ENCODE measurements at regions of chr17 and their contacts with region 1.

Region 1: DNA sequence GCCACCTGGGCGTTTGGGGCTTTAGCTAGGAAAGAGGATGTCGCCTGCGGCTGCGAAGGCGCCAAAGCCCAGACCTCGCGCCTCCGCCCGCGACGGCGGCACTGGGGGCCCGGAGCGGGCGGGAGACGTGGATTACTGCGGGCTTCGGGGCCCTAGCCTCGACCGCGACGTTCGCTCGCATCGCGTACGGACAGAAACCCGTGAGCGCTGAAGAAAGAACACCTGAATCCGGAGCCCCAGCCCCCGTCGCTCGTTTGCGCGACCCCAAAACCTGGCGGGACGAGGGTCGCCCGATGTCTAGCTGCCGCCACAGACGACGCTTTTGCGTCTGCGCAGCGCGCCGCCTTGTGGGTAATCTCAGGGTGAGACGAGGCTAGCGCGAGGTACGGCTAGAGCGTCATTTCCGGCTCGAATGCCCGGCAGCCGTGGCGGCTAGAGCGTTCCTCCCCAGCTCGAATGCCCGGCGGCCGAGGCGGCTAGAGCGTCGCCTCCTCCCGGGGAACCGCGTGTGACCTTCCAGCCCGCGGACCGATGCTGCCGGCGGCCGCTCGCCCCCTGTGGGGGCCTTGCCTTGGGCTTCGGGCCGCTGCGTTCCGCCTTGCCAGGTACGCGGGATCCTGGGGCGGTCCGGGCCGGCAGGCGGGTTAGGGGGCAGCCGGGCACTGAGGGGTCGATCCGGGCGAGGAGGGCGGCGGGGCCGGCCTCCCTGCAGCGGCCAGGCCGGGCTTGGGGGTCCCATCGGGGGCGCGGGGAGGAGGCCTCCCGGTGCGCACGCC is at the start of gene MRPL12:
- DNase-seq: peak; percentile 90
- H3K4me3 Mint-ChIP-seq: peak within 1 kb of the TSS; percentile 98
- H3K27ac Mint-ChIP-seq: peak within 1 kb of the TSS; percentile 97
- H3K4me1 Mint-ChIP-seq: peaks cover 12% of the 10 kb centered on the region
- H3K27me3 Mint-ChIP-seq: no peaks in the 10 kb centered on the region
- CTCF ChIP-seq: no peak
- total RNA-seq, gene MRPL12: 82.6 and 143 TPM in 2 replicates

Region 2: DNA sequence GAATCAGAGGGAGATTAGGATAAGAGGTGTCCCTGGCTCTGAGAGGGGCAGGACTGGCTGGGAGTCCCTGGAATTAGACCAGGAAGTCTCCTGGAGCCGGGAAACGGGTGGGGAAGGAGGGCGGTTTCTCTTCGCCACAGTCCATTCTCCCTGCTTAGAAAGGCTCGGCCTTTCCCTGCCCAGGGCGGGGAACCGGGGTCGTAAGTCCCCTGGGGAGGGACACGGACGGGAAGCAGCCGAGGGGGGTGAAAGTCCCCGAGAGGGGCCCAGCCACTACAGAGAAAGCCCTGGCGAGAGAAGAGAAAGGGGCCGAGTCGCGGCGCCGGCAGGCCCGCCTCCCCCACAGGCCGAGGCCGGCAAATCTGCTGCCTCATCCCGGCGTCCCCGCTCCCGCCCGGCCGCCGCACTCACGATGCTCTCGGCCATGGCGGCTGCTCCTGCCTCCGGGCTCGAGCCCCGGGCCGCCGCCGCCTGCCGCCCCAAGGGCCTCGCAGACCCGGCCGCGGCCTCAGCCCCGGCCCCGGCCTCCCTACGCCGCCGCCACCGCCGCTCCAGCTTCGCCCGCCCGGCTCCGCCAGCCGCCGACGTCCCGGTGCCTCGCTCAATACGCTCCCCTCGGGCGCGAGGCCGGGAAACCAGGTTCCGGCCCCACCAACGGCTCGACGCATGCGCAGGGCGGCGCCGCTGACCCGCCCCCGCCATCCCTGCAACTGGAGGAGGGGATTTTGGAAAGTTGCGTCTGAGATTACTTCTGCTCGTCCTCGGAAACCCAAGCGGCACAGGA is 66.5 kb before region 1 on chr17 and contains the starts of genes NPLOC4 and TSPAN10:
- CTCF ChIA-PET with region 1: no interaction called
- POLR2A ChIA-PET with region 1: interaction called, 21 read pairs
- intact Hi-C with region 1: no loop called
- DNase-seq: peak; percentile 86
- H3K4me3 Mint-ChIP-seq: peak within 1 kb of the TSS; percentile 89
- H3K27ac Mint-ChIP-seq: peak within 1 kb of the TSS; percentile 96
- H3K4me1 Mint-ChIP-seq: peaks cover 9% of the 10 kb centered on the region
- H3K27me3 Mint-ChIP-seq: no peaks in the 10 kb centered on the region
- CTCF ChIP-seq: no peak
- total RNA-seq, gene NPLOC4: 83.9 and 95.1 TPM in 2 replicates
- total RNA-seq, gene TSPAN10: 1.8 and 2.1 TPM in 2 replicates

Region 3: DNA sequence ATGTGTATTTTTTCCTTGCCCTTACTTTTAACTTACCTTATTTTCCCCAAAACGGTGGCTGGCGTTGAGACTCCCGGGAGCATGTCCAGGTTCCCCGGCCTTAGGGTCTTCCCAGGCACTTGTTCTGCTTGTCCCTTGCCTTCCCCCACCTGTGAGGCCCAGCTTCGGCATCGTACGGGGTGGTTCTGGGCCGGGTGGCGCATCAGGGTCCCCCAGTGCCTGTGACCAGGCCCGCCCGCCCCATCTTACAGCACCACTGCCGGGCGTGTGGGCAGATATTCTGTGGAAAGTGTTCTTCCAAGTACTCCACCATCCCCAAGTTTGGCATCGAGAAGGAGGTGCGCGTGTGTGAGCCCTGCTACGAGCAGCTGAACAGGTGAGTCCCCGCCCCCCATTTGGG is 12.0 kb before region 1 on chr17:
- CTCF ChIA-PET with region 1: interaction called, 4 read pairs
- POLR2A ChIA-PET with region 1: interaction called, 122 read pairs
- intact Hi-C with region 1: no loop called
- DNase-seq: no peak
- H3K4me3 Mint-ChIP-seq: no peak overlapping the region
- H3K27ac Mint-ChIP-seq: no peak overlapping the region
- H3K4me1 Mint-ChIP-seq: no peaks in the 10 kb centered on the region
- H3K27me3 Mint-ChIP-seq: no peaks in the 10 kb centered on the region
- CTCF ChIP-seq: no peak

Region 4: GRCh38 chr17:81722184-81723120 is 19.3 kb after region 1 on chr17:
- CTCF ChIA-PET with region 1: interaction called, 3 read pairs
- POLR2A ChIA-PET with region 1: interaction called, 34 read pairs
- intact Hi-C with region 1: no loop called
- DNase-seq: no peak
- H3K4me3 Mint-ChIP-seq: no peak overlapping the region
- H3K27ac Mint-ChIP-seq: no peak overlapping the region
- H3K4me1 Mint-ChIP-seq: peaks cover 21% of the 10 kb centered on the region
- H3K27me3 Mint-ChIP-seq: no peaks in the 10 kb centered on the region
- CTCF ChIP-seq: no peak

Region 5: DNA sequence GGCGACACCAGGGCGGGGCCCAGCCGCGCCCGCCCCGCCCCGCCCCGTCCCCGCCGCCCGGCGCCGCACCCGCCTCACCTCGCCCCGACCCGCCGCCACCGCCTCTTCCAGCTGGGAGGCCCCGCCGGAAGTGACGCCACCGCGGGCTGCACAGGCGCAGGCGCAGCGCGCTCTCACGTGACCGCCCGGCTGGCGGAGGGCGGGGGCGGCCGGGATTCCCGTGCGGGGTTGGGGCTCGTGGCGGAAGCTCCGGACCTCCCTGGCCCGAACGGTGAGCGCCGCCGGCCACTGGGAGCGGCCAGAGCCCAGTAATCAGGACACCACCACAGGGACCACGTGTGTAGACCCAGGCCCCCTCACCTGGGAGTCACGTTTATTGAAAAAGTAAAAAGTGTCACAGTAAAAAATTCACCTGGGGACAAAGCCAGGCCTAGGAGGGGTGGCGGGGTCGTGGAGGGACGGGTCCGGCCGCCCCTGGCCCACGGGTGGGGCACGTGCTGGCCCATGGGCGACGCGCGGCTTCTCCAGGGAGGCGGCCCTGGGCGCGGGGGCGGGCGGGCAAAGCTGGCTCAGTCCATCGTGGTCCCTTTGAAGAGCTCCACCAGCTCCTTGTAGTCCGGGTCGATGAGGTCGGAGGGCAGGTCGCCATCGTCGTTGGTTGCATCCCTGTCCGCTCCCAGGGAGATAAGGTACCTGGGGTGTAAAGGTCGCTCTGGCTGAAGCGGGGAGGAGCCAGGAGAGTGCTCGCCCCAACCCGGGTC is 130.2 kb after region 1 on chr17 and contains the start of gene MCRIP1:
- CTCF ChIA-PET with region 1: no interaction called
- POLR2A ChIA-PET with region 1: interaction called, 16 read pairs
- intact Hi-C with region 1: no loop called
- DNase-seq: peak; percentile 91
- H3K4me3 Mint-ChIP-seq: peak within 1 kb of the TSS; percentile 79
- H3K27ac Mint-ChIP-seq: peak within 1 kb of the TSS; percentile 80
- H3K4me1 Mint-ChIP-seq: peaks cover 9% of the 10 kb centered on the region
- H3K27me3 Mint-ChIP-seq: no peaks in the 10 kb centered on the region
- CTCF ChIP-seq: no peak
- total RNA-seq, gene MCRIP1: 35.6 and 39.2 TPM in 2 replicates

Region 6: DNA sequence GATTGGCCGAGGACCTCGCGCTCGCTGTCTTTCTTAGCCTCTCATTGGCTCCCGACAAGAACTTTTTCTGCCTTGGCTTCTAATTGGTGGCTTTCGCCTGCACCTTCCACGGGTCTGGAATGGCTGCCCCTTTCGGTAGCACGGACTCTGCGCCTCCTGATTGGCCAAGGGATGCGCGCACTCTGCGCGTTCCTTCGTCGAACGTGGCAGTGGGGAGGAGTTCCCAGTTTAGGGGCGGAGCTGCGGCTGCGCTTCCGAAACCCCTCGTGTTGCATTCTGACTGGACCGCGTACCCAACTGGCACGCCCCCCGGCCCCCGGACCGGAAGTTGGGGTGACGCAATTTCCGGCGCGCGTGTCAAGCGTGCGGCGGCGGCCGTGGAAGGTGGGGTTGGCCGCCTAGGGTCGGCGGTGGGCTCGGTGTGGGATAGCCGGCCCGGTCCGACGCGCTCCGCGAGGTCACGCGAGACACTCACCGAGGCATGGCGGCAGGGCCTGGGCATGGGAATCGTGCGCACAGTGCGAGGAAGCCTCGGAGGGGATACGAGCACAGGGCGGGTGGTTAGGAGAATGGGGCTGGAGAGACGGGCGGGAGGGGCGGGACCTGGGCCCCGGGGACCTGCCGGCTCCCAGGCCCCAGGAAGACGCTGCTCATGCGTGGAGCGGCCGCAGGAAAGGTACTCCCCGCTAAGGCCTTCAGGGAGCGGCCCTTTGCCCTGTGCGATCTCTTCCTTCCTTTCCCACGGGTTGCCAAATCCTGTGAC is 157.8 kb after region 1 on chr17:
- CTCF ChIA-PET with region 1: interaction called, 6 read pairs
- POLR2A ChIA-PET with region 1: interaction called, 12 read pairs
- intact Hi-C with region 1: no loop called
- DNase-seq: peak; percentile 100
- H3K4me3 Mint-ChIP-seq: peak overlapping the region; percentile 89
- H3K27ac Mint-ChIP-seq: peak overlapping the region; percentile 98
- H3K4me1 Mint-ChIP-seq: peaks cover 33% of the 10 kb centered on the region
- H3K27me3 Mint-ChIP-seq: no peaks in the 10 kb centered on the region
- CTCF ChIP-seq: no peak

Measured in MCF 10A (cell line).